IMR-90 (cell line): ENCODE measurements at regions of chr19 and their contacts with region 1.

Region 1: DNA sequence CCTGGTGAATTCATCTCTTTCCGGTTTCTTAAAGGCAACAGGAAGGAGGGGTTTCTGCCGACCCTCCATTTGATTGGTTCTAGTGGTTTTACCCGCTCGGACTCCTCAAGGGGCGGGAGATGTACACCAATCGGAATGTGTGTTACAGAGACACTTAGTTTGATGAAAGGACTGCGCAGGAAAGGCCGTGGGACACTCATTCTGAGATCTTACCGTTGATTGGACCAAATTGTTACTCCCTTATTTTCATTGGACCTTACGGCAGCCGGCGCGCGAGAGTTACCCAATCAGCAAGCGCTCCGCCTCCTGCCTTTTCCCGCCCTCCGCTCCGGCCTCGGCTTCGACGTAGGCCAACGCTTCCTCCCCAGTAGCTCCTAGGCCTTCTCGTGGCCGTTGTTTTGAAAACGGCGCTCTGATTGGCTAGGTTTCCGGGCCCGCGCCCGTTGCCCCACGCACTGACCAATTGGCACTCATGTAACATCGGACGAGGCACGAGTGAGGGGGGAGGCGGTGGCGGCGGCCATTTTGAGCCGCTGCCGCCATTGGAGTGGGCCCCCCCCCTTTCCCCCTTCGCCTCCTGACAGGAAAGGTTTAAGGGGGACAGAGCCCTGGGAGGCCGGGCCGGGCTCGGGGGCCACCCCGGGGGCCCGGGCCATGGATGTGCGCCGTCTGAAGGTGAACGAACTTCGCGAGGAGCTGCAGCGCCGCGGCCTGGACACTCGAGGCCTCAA is at the start of gene HNRNPUL1:
- DNase-seq: peak; percentile 100
- ATAC-seq: peak; percentile 77
- H3K4me3 ChIP-seq: peak within 1 kb of the TSS; percentile 82
- H3K27ac ChIP-seq: peak within 1 kb of the TSS; percentile 93
- H3K4me1 ChIP-seq: peaks cover 9% of the 10 kb centered on the region
- H3K27me3 ChIP-seq: no peaks in the 10 kb centered on the region
- CTCF ChIP-seq: 0 out of 2 replicates have a peak, but pooled peaks have one; percentile 22
- POLR2A ChIP-seq: no peak
- RAD21 ChIP-seq: no peak
- total RNA-seq, gene HNRNPUL1: 50.7 and 56.1 TPM in 2 replicates

Region 2: DNA sequence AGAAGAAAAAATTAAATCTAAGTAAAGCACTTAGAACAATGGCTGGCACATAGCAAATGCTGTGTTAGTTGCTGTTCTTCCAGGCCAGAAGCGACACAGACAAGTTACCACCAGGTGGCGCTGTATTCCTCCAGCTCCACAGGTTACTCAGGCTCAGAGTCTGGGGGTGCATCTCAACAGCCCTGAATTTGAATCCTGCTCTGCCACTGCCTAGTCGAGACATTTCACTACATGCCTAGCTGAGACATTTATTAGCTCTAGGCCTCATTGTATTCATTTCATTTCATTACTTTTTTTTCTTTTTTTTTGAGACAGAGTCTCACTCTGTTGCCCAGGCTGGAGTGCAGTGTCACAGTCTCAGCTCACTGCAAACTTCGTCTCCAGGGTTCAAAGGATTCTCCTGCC is 289.4 kb before region 1 on chr19:
- CTCF ChIA-PET with region 1: no interaction called
- POLR2A ChIA-PET with region 1: no interaction called
- dilution Hi-C with region 1: no loop called
- in situ Hi-C with region 1: no loop called
- intact Hi-C with region 1: loop called (anchors 1 kb)
- DNase-seq: peak; percentile 73
- ATAC-seq: peak; percentile 82
- H3K4me3 ChIP-seq: no peak overlapping the region
- H3K27ac ChIP-seq: no peak overlapping the region
- H3K4me1 ChIP-seq: no peaks in the 10 kb centered on the region
- H3K27me3 ChIP-seq: no peaks in the 10 kb centered on the region; the same call in 1 of the 2 replicates
- CTCF ChIP-seq: peak; percentile 66
- POLR2A ChIP-seq: no peak
- RAD21 ChIP-seq: peak; percentile 66

Region 3: GRCh38 chr19:41133260-41133659 is 130.8 kb before region 1 on chr19:
- CTCF ChIA-PET with region 1: no interaction called
- POLR2A ChIA-PET with region 1: no interaction called
- dilution Hi-C with region 1: no loop called
- in situ Hi-C with region 1: no loop called
- intact Hi-C with region 1: no loop called
- DNase-seq: no peak
- ATAC-seq: no peak
- H3K4me3 ChIP-seq: no peak overlapping the region
- H3K27ac ChIP-seq: no peak overlapping the region
- H3K4me1 ChIP-seq: no peaks in the 10 kb centered on the region
- H3K27me3 ChIP-seq: peaks cover 24% of the 10 kb centered on the region
- CTCF ChIP-seq: no peak
- POLR2A ChIP-seq: no peak
- RAD21 ChIP-seq: no peak

Region 4: DNA sequence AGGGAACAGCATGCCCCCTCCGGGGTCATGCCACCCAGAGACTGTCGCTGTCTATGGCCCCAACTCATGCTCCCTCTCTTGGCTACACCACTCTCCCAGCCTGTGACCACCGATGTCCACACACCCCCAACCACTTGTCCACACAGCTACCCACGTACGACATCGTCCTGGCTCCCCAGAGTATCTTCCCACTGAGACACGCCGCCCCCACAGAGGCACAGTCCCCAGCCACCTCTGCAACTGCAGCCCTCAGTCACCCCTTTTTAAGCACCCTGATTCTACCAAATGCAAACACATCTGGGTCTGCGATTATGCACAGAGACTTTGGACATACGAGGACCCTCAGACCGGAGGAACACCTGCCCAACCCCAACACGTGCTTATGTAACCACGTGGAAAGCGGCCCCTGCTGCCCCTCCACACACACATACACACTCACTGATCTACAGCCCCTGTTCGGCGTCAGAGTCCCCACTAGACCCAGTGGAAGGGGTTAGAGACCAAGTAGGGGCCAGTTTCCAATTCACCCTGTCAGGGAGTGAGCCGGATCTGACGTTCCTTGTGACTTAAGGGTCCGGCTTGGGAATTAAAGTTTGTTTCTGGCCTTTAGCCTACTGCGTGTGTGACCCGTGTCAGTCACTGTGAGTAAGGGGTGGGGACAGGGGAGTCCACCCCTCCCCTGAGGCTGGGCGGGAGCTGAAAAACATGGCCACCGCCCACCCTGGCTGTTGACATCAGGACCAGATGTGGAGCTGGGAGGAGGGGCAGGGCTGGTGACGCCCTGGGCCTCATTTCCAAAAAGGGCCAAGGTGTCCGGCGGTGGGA is 56.9 kb before region 1 on chr19:
- CTCF ChIA-PET with region 1: interaction called, 16 read pairs
- POLR2A ChIA-PET with region 1: interaction called, 7 read pairs
- dilution Hi-C with region 1: no loop called
- in situ Hi-C with region 1: loop called (anchors 5 kb)
- intact Hi-C with region 1: loop called (anchors 1 kb)
- DNase-seq: no peak
- ATAC-seq: no peak
- H3K4me3 ChIP-seq: no peak overlapping the region
- H3K27ac ChIP-seq: no peak overlapping the region
- H3K4me1 ChIP-seq: no peaks in the 10 kb centered on the region
- H3K27me3 ChIP-seq: no peaks in the 10 kb centered on the region
- CTCF ChIP-seq: no peak
- POLR2A ChIP-seq: no peak
- RAD21 ChIP-seq: no peak

Region 5: GRCh38 chr19:41225238-41226052 is 38.6 kb before region 1 on chr19:
- CTCF ChIA-PET with region 1: interaction called, 10 read pairs
- POLR2A ChIA-PET with region 1: interaction called, 3 read pairs
- dilution Hi-C with region 1: no loop called
- in situ Hi-C with region 1: no loop called
- intact Hi-C with region 1: loop called (anchors 2 kb)
- DNase-seq: peak; percentile 100
- ATAC-seq: peak; percentile 71
- H3K4me3 ChIP-seq: peak overlapping the region; percentile 23
- H3K27ac ChIP-seq: peak overlapping the region; percentile 96
- H3K4me1 ChIP-seq: peaks cover 43% of the 10 kb centered on the region
- H3K27me3 ChIP-seq: no peaks in the 10 kb centered on the region
- CTCF ChIP-seq: no peak
- POLR2A ChIP-seq: peak; percentile 32; the same call in 1 of the 2 replicates
- RAD21 ChIP-seq: no peak

Region 6: GRCh38 chr19:41353466-41354342 is 89.7 kb after region 1 on chr19 and contains the start of gene TGFB1:
- CTCF ChIA-PET with region 1: no interaction called
- POLR2A ChIA-PET with region 1: no interaction called
- dilution Hi-C with region 1: no loop called
- in situ Hi-C with region 1: no loop called
- intact Hi-C with region 1: loop called (anchors 5 kb)
- DNase-seq: peak; percentile 87
- ATAC-seq: peak; percentile 78
- H3K4me3 ChIP-seq: peak within 1 kb of the TSS; percentile 76
- H3K27ac ChIP-seq: peak within 1 kb of the TSS; percentile 73
- H3K4me1 ChIP-seq: no peaks in the 10 kb centered on the region
- H3K27me3 ChIP-seq: no peaks in the 10 kb centered on the region
- CTCF ChIP-seq: peak; percentile 89
- POLR2A ChIP-seq: peak; percentile 85
- RAD21 ChIP-seq: peak; percentile 52
- total RNA-seq, gene TGFB1: 3.2 and 3.9 TPM in 2 replicates